ENCODE measurements at regions of chr2 and their contacts with region 1.

Region 1: DNA sequence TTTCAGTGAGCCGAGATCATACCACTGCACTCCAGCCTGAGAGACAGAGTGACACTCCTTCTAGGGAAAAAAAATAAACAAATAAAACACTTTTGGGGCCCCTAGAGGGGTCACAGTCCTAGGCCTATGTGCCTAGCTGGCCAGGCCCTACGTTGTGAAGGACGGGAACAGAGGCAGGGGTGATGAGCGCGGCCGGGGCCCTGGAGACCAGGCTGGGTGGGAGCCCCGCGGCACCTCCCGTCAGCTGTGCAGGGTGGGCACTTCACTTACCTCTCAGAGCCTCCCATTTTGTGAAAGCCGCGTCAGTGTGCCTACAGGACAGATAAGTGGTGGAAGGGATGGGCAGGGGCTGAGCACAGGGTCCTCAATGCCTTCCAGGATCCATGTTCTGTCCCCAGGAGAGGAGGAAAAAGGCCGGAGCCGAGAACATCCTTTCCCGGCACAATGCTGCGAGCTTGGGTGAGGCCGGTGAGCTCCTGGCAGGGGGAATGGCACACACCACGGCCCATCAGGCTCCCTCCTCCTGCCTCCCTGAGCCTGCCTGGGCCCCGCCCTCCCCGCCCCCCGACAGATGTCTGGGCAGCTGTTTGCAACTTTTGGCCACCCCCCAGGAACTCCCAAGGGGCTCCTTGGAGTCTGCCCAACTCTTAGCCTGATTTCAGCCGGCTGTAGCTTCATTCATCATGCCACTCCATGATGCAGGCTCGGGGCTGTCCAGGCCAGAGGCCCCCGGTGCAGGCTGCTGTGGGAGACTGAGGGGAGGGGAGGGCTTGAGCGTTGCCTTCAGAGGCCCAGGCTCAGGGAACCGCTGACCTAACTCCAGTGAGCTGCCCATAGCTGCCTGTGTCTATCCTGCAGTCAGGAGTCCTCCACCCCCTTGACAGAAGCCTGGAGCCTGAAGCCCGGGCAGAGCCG is 196.5 kb downstream of the TFCP2L1 start:
- DNase-seq: peak; percentile 62 to 82
- ATAC-seq: peak in 3 of 4 donors; percentile 51 to 64 (median 51)
- H3K4me3 ChIP-seq: no peak overlapping the region
- H3K27ac ChIP-seq: no peak overlapping the region
- H3K4me1 ChIP-seq: no peaks in the 10 kb centered on the region
- H3K27me3 ChIP-seq: peaks cover 0 to 4% (median 0%) of the 10 kb centered on the region in 3 donors
- CTCF ChIP-seq: no peak

Region 2: DNA sequence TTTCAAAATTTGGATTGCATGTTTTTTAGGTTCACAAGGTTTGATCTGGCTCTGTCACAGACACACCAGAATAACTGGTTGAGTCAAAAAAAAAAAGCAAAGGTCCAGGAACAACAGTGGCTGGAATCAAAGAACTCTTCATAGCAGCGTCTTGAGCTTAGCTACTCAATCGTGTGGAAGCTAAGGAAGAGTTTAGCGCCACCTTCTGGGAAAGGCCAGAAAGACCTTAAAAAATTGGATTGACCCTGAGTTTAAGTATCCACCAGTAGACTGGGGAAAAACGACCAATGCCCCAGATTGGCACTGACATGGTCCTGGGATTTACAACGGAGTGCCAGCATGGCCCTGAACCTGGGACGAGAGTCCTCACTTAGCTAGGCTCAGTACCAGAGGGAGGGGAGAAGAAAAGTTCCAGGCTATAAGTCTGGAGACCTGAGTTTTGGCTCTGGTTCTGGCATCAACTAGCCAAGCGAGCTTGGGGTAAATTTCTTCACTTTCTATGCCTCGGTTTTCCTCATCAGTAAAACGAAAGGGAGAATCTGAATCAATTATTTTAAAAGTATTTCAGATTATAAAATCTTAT is 267.6 kb after region 1 on chr2:
- intact Hi-C with region 1: loop called (anchors 5 kb)
- DNase-seq: no peak
- ATAC-seq: peak; percentile 42 to 69 (median 59)
- H3K4me3 ChIP-seq: no peak overlapping the region
- H3K27ac ChIP-seq: no peak overlapping the region
- H3K4me1 ChIP-seq: peaks cover 28% of the 10 kb centered on the region
- H3K27me3 ChIP-seq: no peaks in the 10 kb centered on the region
- CTCF ChIP-seq: peak; percentile 64

Region 3: GRCh38 chr2:121748202-121748601 is 659.7 kb after region 1 on chr2:
- intact Hi-C with region 1: no loop called
- DNase-seq: no peak
- ATAC-seq: peak in 3 of 4 donors; percentile 52 to 57 (median 55)
- H3K4me3 ChIP-seq: no peak overlapping the region
- H3K27ac ChIP-seq: no peak overlapping the region
- H3K4me1 ChIP-seq: no peaks in the 10 kb centered on the region
- H3K27me3 ChIP-seq: no peaks in the 10 kb centered on the region
- CTCF ChIP-seq: no peak